Endothelial cell of umbilical vein (primary cell): ENCODE measurements at regions of chr9 and their contacts with region 1.

Region 1: DNA sequence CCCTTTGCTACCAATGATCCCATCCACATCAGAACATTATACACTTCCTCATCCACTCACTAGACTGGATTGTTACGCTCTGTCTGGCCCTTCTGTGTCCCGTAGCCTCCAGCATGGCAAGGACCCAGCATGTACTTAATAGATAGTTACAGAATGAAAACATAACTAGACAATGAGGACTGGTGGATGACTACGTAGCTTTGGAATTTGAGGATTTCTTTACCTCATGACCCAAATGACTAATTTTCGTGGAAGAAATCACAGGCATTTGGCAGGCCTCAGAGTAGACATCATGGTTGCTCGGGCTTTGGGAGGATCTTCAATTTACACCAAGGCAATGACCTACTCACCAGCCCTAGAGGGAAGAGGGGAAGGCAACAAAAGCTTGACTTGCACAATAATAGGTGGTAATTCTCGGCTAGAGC is 299.8 kb downstream of the TLE1 start:
- DNase-seq: peak; percentile 98
- H3K4me3 ChIP-seq: no peak overlapping the region
- H3K27ac ChIP-seq: peak overlapping the region; percentile 100
- H3K4me1 ChIP-seq: peaks cover 31% of the 10 kb centered on the region
- H3K27me3 ChIP-seq: no peaks in the 10 kb centered on the region
- CTCF ChIP-seq: no peak
- POLR2A ChIP-seq: peak; percentile 60

Region 2: GRCh38 chr9:81490605-81491331 is 101.2 kb after region 1 on chr9:
- CTCF ChIA-PET with region 1: no interaction called
- POLR2A ChIA-PET with region 1: no interaction called
- dilution Hi-C with region 1: no loop called
- intact Hi-C with region 1: loop called (anchors 1 kb)
- DNase-seq: peak; percentile 68
- H3K4me3 ChIP-seq: no peak overlapping the region
- H3K27ac ChIP-seq: peak overlapping the region; percentile 27
- H3K4me1 ChIP-seq: peaks cover 5% of the 10 kb centered on the region
- H3K27me3 ChIP-seq: no peaks in the 10 kb centered on the region
- CTCF ChIP-seq: no peak
- POLR2A ChIP-seq: no peak

Region 3: DNA sequence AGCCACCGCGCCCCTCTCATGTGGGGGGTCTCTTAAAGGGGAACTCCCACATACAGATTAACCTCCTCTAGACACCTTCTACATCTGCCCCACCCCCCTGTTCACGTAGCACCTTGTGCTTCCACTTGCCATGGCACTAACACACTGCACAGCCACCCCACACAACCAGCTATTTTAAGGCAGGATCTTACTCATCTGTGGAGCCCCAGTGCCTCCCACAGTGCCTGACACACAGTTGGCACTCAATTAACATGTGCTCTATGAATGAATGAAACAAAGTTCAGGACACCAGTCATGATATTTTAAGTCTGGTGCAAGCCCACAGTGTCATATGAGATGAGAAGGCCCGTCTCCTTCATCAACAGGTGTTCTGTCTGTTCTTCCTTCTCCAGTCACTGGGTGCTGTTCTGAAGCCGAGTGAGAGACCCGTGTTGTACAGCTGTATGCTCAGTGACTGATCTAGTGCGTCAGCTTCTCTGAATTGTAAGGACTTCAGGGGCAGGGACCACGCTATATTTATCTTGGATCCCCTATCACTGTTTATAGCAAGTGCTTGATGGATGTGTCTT is 150.6 kb after region 1 on chr9:
- CTCF ChIA-PET with region 1: no interaction called
- POLR2A ChIA-PET with region 1: no interaction called
- dilution Hi-C with region 1: no loop called
- intact Hi-C with region 1: loop called (anchors 1 kb)
- DNase-seq: no peak
- H3K4me3 ChIP-seq: no peak overlapping the region
- H3K27ac ChIP-seq: no peak overlapping the region
- H3K4me1 ChIP-seq: peaks cover 8% of the 10 kb centered on the region
- H3K27me3 ChIP-seq: no peaks in the 10 kb centered on the region
- CTCF ChIP-seq: no peak
- POLR2A ChIP-seq: no peak

Region 4: DNA sequence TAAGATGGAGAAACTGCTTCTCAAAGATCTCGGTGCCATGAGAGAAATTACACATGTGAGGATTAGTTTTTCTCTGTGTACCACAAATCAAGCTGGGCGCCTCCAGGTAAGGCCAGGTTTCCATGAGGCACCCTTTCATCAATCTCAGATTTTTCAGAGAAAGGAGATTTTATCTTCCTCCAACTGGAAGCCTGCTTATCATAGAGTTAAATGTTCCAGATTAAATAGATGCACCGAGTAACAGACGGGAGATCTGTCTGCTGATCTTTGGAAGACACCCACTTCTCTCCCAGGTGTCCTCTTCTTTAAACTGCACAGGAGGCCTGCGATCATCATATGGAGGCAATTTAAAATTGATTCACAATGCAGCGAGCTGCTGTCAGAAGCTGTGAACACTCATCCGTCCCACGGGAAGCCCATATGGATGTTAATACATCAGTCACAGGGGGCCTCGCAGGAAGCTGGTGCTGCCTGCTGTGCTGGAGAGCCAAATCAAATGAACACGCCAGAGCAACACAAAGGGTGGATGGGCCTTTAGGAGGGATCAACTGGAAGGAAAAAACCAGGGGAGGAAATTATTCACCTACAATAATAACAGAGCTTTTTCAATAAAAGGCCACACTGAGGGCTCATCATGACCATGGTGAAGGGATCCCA is 206.4 kb after region 1 on chr9:
- CTCF ChIA-PET with region 1: no interaction called
- POLR2A ChIA-PET with region 1: no interaction called
- dilution Hi-C with region 1: no loop called
- intact Hi-C with region 1: loop called (anchors 1 kb)
- DNase-seq: peak; percentile 94
- H3K4me3 ChIP-seq: peak overlapping the region in 1 of 3 experiments; percentile 21
- H3K27ac ChIP-seq: peak overlapping the region; percentile 87
- H3K4me1 ChIP-seq: peaks cover 52% of the 10 kb centered on the region
- H3K27me3 ChIP-seq: no peaks in the 10 kb centered on the region
- CTCF ChIP-seq: no peak
- POLR2A ChIP-seq: peak; percentile 22

Region 5: DNA sequence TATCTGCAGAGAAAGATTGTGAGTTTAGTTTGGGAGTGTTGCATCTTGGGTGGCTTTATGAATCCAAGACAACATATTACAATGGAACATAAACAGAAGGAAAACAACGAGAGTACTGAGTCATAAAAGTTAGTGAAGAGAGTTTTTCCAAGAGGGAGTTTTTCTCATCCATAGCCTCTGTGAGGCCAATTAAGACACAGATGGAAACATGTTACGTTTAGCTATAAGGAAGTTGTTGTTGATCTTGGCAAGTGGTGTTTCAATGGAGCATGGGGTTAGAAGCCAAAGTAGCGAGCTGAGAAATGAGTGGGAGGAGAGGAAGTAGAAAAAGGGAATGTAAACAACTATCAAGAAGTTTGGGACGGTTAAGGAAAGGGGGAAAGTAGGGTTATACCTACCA is 485.4 kb after region 1 on chr9:
- CTCF ChIA-PET with region 1: no interaction called
- POLR2A ChIA-PET with region 1: no interaction called
- dilution Hi-C with region 1: no loop called
- intact Hi-C with region 1: loop called (anchors 1 kb)
- DNase-seq: peak; percentile 97
- H3K4me3 ChIP-seq: no peak overlapping the region
- H3K27ac ChIP-seq: peak overlapping the region; percentile 95
- H3K4me1 ChIP-seq: peaks cover 38% of the 10 kb centered on the region
- H3K27me3 ChIP-seq: no peaks in the 10 kb centered on the region
- CTCF ChIP-seq: no peak
- POLR2A ChIP-seq: no peak